Endothelial cell of umbilical vein (primary cell): ENCODE measurements at regions of chr15 and their contacts with region 1.

Region 1: DNA sequence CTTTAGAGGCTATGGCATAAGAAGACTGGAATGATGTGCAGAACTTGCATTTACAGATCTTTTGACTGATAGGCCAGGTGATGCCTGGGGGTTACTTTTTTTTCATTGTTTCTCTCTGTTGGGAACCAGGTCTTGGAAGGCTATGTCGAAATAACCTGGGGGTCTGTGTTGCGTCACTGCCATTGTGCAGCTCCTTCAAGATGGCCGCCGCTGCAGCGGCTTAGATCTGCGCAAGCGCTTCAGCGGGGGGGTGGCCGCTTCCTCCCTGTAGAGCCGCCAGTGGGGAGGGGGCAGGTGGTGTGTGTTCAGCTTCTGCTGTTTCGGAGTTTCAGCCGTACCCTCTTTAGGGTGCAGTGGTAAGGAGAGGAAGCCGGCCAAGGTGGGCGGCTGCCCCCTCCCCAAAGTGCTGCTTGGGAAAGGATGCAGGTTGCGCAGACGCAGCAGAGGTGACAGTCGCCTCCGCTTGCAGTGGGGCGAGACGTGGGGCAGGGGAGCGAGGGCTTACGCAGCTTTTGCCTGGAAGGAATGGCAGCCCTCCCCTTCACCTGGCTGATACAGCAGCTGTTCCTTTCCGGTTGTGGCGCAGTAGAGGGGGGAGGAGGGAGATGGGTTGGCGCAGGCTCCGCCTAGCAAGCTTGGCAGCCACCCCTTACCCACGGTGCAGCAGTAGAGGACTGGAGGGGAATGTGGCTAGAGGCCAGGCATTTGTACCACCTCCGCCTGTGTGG is 1.5 kb downstream of the SNRPN start:
- DNase-seq: peak; percentile 71
- H3K4me3 ChIP-seq: peak overlapping the region; percentile 41 to 95 (median 79)
- H3K27ac ChIP-seq: peak overlapping the region; percentile 64
- H3K4me1 ChIP-seq: peaks cover 2% of the 10 kb centered on the region
- H3K27me3 ChIP-seq: no peaks in the 10 kb centered on the region
- CTCF ChIP-seq: no peak
- POLR2A ChIP-seq: no peak

Region 2: GRCh38 chr15:23518104-23518503 is 1438.2 kb before region 1 on chr15:
- CTCF ChIA-PET with region 1: no interaction called
- POLR2A ChIA-PET with region 1: no interaction called
- dilution Hi-C with region 1: no loop called
- intact Hi-C with region 1: no loop called
- DNase-seq: no peak
- H3K4me3 ChIP-seq: no peak overlapping the region
- H3K27ac ChIP-seq: no peak overlapping the region
- H3K4me1 ChIP-seq: no peaks in the 10 kb centered on the region
- H3K27me3 ChIP-seq: no peaks in the 10 kb centered on the region
- CTCF ChIP-seq: no peak
- POLR2A ChIP-seq: no peak

Region 3: GRCh38 chr15:23642413-23643044 is 1313.7 kb before region 1 on chr15:
- CTCF ChIA-PET with region 1: no interaction called
- POLR2A ChIA-PET with region 1: no interaction called
- dilution Hi-C with region 1: no loop called
- intact Hi-C with region 1: loop called (anchors 10 kb)
- DNase-seq: peak; percentile 37
- H3K4me3 ChIP-seq: no peak overlapping the region
- H3K27ac ChIP-seq: no peak overlapping the region
- H3K4me1 ChIP-seq: no peaks in the 10 kb centered on the region
- H3K27me3 ChIP-seq: no peaks in the 10 kb centered on the region
- CTCF ChIP-seq: peak; percentile 55 to 60
- POLR2A ChIP-seq: no peak

Region 4: DNA sequence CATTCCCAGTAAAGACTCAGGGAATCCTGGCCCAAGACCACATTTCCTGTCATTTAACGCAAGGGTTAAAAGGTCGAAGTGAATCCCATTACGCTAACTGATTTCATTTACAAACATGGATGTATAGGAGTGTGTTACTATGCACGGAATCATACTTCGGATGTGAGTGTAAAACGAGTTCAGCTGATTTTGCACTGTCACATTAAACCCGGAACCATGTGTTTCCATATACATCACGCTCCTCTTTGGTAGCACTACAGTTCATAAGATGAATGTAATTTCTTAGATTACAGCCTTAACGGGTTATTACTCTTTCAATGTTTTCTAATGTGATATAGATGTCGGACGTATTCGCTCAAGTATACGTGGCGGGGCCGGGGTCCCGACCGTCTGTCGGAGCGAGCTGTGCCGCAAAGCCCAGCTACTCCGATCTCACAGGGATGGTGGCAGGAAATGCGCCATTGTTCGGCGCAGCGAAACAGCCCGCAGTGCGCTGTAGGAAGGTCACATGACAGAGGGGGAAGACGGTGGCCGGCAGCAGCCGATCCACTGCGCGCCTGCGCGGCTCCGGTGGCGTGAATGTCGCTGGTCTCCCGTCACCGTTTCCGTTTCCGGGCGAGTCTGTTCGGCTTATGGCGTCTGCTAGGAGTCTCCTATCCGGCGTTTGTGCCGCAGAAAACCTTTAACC is 183.4 kb before region 1 on chr15:
- CTCF ChIA-PET with region 1: no interaction called
- POLR2A ChIA-PET with region 1: no interaction called
- dilution Hi-C with region 1: no loop called
- intact Hi-C with region 1: loop called (anchors 5 kb)
- DNase-seq: peak; percentile 81
- H3K4me3 ChIP-seq: peak overlapping the region in 2 of 3 experiments; percentile 40 to 49
- H3K27ac ChIP-seq: peak overlapping the region; percentile 65
- H3K4me1 ChIP-seq: no peaks in the 10 kb centered on the region
- H3K27me3 ChIP-seq: no peaks in the 10 kb centered on the region
- CTCF ChIP-seq: no peak
- POLR2A ChIP-seq: peak; percentile 33

Region 5: GRCh38 chr15:24858737-24859601 is 97.3 kb before region 1 on chr15:
- CTCF ChIA-PET with region 1: no interaction called
- POLR2A ChIA-PET with region 1: no interaction called
- dilution Hi-C with region 1: no loop called
- intact Hi-C with region 1: loop called (anchors 1 kb)
- DNase-seq: peak; percentile 53
- H3K4me3 ChIP-seq: peak overlapping the region in 1 of 3 experiments; percentile 5
- H3K27ac ChIP-seq: peak overlapping the region; percentile 69
- H3K4me1 ChIP-seq: peaks cover 8% of the 10 kb centered on the region
- H3K27me3 ChIP-seq: no peaks in the 10 kb centered on the region
- CTCF ChIP-seq: no peak
- POLR2A ChIP-seq: no peak

Region 6: DNA sequence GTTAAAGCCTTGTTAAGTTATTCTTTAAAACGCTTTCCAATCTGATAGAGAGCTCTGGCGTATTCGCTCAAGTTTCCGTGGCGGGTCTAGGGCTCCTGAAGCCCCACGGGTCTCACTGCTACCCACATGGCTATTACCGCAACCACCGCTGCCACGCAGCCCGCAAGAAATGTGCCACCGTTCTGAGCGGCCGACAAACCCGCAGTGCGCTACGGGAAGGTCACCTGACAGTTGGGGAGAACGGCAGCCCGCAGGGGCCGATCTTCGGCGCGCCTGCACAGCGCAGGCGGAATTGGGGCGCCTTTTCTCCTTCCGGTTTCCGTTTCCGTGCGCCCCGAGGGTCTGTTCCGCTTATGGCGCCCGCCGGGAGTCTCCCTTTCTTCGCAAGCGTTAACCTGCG is 78.1 kb before region 1 on chr15:
- CTCF ChIA-PET with region 1: no interaction called
- POLR2A ChIA-PET with region 1: no interaction called
- dilution Hi-C with region 1: no loop called
- intact Hi-C with region 1: loop called (anchors 2 kb)
- DNase-seq: peak; percentile 33
- H3K4me3 ChIP-seq: peak overlapping the region; percentile 9 to 53 (median 41)
- H3K27ac ChIP-seq: no peak overlapping the region
- H3K4me1 ChIP-seq: no peaks in the 10 kb centered on the region
- H3K27me3 ChIP-seq: no peaks in the 10 kb centered on the region
- CTCF ChIP-seq: no peak
- POLR2A ChIP-seq: no peak

Region 7: DNA sequence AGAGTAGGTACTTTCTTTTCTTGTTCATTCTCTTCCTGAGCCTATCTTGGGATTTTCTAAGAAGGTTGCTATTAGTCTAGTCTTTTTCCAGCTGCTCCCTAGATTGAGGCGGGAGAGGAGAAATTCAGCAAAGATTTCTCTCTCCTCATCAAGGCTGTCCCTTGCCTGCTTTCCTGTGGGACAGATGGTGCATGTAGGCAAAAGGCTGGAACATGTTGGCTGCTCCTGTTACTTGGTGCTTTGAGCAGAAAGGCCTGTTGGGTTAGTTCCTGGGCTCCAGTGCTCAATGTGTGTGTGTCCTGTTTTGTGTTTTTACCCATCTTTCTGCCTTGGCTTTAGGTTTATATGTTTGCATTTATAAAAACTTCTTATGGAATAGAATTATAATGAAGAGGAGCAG is 10.6 kb before region 1 on chr15:
- CTCF ChIA-PET with region 1: no interaction called
- POLR2A ChIA-PET with region 1: no interaction called
- dilution Hi-C with region 1: no loop called
- intact Hi-C with region 1: loop called (anchors 1 kb)
- DNase-seq: no peak
- H3K4me3 ChIP-seq: no peak overlapping the region
- H3K27ac ChIP-seq: no peak overlapping the region
- H3K4me1 ChIP-seq: peaks cover 2% of the 10 kb centered on the region
- H3K27me3 ChIP-seq: no peaks in the 10 kb centered on the region
- CTCF ChIP-seq: no peak
- POLR2A ChIP-seq: no peak